CD4-positive, alpha-beta T cell (primary cell): ENCODE measurements at regions of chr5 and their contacts with region 1.

Region 1: GRCh38 chr5:43040287-43041098 is at the start of gene ANXA2R:
- DNase-seq: peak; percentile 90 to 98 (median 93)
- ATAC-seq: peak; percentile 53
- H3K4me3 ChIP-seq: peak within 1 kb of the TSS; percentile 84
- H3K4me3 Mint-ChIP-seq: peak within 1 kb of the TSS; percentile 98
- H3K27ac ChIP-seq: peak within 1 kb of the TSS; percentile 96 to 98
- H3K27ac Mint-ChIP-seq: peak within 1 kb of the TSS; percentile 98
- H3K4me1 ChIP-seq: peaks cover 73% of the 10 kb centered on the region
- H3K4me1 Mint-ChIP-seq: peaks cover 46% of the 10 kb centered on the region
- H3K27me3 ChIP-seq: no peaks in the 10 kb centered on the region
- H3K27me3 Mint-ChIP-seq: no peaks in the 10 kb centered on the region
- CTCF ChIP-seq: peak; percentile 86
- total RNA-seq, gene ANXA2R: 45.6 to 48.9 TPM

Region 2: DNA sequence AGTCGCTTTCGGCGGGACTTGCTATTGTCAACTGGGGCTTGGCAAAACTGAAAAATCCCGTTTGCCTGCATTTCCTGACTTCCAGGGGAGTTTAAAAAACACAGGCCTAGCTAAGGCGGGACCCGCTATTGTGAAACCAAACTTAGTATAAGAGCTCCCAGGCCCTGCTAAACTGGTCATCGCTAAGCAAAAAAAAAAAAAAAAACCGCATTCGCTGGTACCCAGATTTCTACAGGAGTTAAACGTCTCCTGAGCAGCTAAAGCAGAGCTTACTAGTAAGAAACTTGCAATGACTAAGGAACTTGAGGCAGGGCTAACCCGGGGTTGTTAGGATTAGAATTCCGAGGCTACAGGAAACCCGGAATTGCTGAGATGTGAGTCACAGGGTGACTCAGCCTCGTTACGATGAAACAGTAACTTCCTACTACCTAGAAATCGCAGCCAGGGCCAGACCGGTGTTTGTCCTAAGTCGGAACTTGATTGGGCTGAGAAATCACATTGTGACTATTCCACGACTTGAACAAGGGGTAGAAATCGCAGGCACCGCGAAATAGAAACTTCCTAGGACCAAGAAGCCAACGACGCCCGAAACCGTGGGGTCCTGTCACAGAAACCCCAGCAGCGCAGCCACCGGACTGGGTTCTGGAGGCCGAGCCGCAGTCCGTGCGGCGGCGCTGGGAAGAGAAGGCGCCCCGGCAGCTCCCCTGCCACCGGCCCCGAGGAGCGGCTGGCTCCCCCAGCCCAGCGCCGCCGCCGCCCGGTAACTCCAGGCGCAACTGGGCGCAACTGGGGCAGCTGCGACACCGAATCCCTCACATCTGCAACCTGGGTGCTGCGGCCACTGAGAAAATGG is 89.8 kb before region 1 on chr5:
- CTCF ChIA-PET with region 1: interaction called, 10 read pairs
- POLR2A ChIA-PET with region 1: interaction called, 234 read pairs
- intact Hi-C with region 1: loop called (anchors 1 to 2 kb)
- DNase-seq: peak; percentile 35 to 90 (median 61)
- ATAC-seq: peak; percentile 41
- H3K4me3 ChIP-seq: peak overlapping the region; percentile 75
- H3K4me3 Mint-ChIP-seq: peak overlapping the region; percentile 98
- H3K27ac ChIP-seq: peak overlapping the region; percentile 96 to 98
- H3K27ac Mint-ChIP-seq: peak overlapping the region; percentile 99
- H3K4me1 ChIP-seq: peaks cover 45% of the 10 kb centered on the region
- H3K4me1 Mint-ChIP-seq: peaks cover 30% of the 10 kb centered on the region
- H3K27me3 ChIP-seq: no peaks in the 10 kb centered on the region
- H3K27me3 Mint-ChIP-seq: no peaks in the 10 kb centered on the region
- CTCF ChIP-seq: no peak

Region 3: GRCh38 chr5:43019614-43020293 is 20.7 kb before region 1 on chr5:
- CTCF ChIA-PET with region 1: interaction called, 179 read pairs
- POLR2A ChIA-PET with region 1: interaction called, 1,378 read pairs
- intact Hi-C with region 1: loop called (anchors 1 to 2 kb)
- DNase-seq: peak; percentile 73 to 97 (median 84)
- ATAC-seq: peak; percentile 61
- H3K4me3 ChIP-seq: peak overlapping the region; percentile 80
- H3K4me3 Mint-ChIP-seq: peak overlapping the region; percentile 99
- H3K27ac ChIP-seq: peak overlapping the region; percentile 98
- H3K27ac Mint-ChIP-seq: peak overlapping the region; percentile 100
- H3K4me1 ChIP-seq: peaks cover 42% of the 10 kb centered on the region
- H3K4me1 Mint-ChIP-seq: peaks cover 57% of the 10 kb centered on the region
- H3K27me3 ChIP-seq: no peaks in the 10 kb centered on the region
- H3K27me3 Mint-ChIP-seq: no peaks in the 10 kb centered on the region
- CTCF ChIP-seq: peak; percentile 69

Region 4: GRCh38 chr5:43061352-43062075 is 21.0 kb after region 1 on chr5:
- CTCF ChIA-PET with region 1: interaction called, 65 read pairs
- POLR2A ChIA-PET with region 1: interaction called, 703 read pairs
- intact Hi-C with region 1: loop called (anchors 1 kb)
- DNase-seq: no peak
- ATAC-seq: no peak
- H3K4me3 ChIP-seq: no peak overlapping the region
- H3K4me3 Mint-ChIP-seq: no peak overlapping the region
- H3K27ac ChIP-seq: peak overlapping the region in 1 of 2 donors; percentile 11
- H3K27ac Mint-ChIP-seq: peak overlapping the region; percentile 52
- H3K4me1 ChIP-seq: peaks cover 13% of the 10 kb centered on the region
- H3K4me1 Mint-ChIP-seq: peaks cover 16% of the 10 kb centered on the region
- H3K27me3 ChIP-seq: no peaks in the 10 kb centered on the region
- H3K27me3 Mint-ChIP-seq: no peaks in the 10 kb centered on the region
- CTCF ChIP-seq: no peak

Region 5: GRCh38 chr5:43073597-43074546 is 33.4 kb after region 1 on chr5:
- CTCF ChIA-PET with region 1: interaction called, 3 read pairs
- POLR2A ChIA-PET with region 1: interaction called, 703 read pairs
- intact Hi-C with region 1: no loop called
- DNase-seq: peak in 11 of 14 experiments; percentile 22 to 79 (median 38)
- ATAC-seq: peak; percentile 82
- H3K4me3 ChIP-seq: no peak overlapping the region
- H3K4me3 Mint-ChIP-seq: no peak overlapping the region
- H3K27ac ChIP-seq: no peak overlapping the region
- H3K27ac Mint-ChIP-seq: peak overlapping the region; percentile 27
- H3K4me1 ChIP-seq: peaks cover 43% of the 10 kb centered on the region
- H3K4me1 Mint-ChIP-seq: peaks cover 46% of the 10 kb centered on the region
- H3K27me3 ChIP-seq: no peaks in the 10 kb centered on the region
- H3K27me3 Mint-ChIP-seq: no peaks in the 10 kb centered on the region
- CTCF ChIP-seq: peak; percentile 70

Region 6: GRCh38 chr5:43110606-43111442 is 70.3 kb after region 1 on chr5:
- CTCF ChIA-PET with region 1: interaction called, 6 read pairs
- POLR2A ChIA-PET with region 1: interaction called, 21 read pairs
- intact Hi-C with region 1: no loop called
- DNase-seq: peak in 11 of 14 experiments; percentile 11 to 72 (median 29)
- ATAC-seq: peak; percentile 87
- H3K4me3 ChIP-seq: no peak overlapping the region
- H3K4me3 Mint-ChIP-seq: peak overlapping the region; percentile 44
- H3K27ac ChIP-seq: peak overlapping the region in 1 of 2 donors; percentile 11
- H3K27ac Mint-ChIP-seq: peak overlapping the region; percentile 74
- H3K4me1 ChIP-seq: peaks cover 25% of the 10 kb centered on the region
- H3K4me1 Mint-ChIP-seq: peaks cover 30% of the 10 kb centered on the region
- H3K27me3 ChIP-seq: no peaks in the 10 kb centered on the region
- H3K27me3 Mint-ChIP-seq: no peaks in the 10 kb centered on the region
- CTCF ChIP-seq: peak; percentile 67

Region 7: GRCh38 chr5:43268188-43268820 is 227.8 kb after region 1 on chr5:
- CTCF ChIA-PET with region 1: no interaction called
- POLR2A ChIA-PET with region 1: no interaction called
- intact Hi-C with region 1: no loop called
- DNase-seq: no peak
- ATAC-seq: no peak
- H3K4me3 ChIP-seq: no peak overlapping the region
- H3K4me3 Mint-ChIP-seq: no peak overlapping the region
- H3K27ac ChIP-seq: no peak overlapping the region
- H3K27ac Mint-ChIP-seq: no peak overlapping the region
- H3K4me1 ChIP-seq: no peaks in the 10 kb centered on the region
- H3K4me1 Mint-ChIP-seq: no peaks in the 10 kb centered on the region
- H3K27me3 ChIP-seq: peaks cover 4 to 6% of the 10 kb centered on the region in 2 experiments
- H3K27me3 Mint-ChIP-seq: peaks cover 44% of the 10 kb centered on the region
- CTCF ChIP-seq: no peak